Activated naive CD8-positive, alpha-beta T cell treated with anti-CD3 and anti-CD28 coated beads, Interleukin-2, amount 10 ng/mL, durations not matched to agents 7 days and 5 days (primary cell): ENCODE measurements at regions of chr19 and their contacts with region 1.

Region 1: DNA sequence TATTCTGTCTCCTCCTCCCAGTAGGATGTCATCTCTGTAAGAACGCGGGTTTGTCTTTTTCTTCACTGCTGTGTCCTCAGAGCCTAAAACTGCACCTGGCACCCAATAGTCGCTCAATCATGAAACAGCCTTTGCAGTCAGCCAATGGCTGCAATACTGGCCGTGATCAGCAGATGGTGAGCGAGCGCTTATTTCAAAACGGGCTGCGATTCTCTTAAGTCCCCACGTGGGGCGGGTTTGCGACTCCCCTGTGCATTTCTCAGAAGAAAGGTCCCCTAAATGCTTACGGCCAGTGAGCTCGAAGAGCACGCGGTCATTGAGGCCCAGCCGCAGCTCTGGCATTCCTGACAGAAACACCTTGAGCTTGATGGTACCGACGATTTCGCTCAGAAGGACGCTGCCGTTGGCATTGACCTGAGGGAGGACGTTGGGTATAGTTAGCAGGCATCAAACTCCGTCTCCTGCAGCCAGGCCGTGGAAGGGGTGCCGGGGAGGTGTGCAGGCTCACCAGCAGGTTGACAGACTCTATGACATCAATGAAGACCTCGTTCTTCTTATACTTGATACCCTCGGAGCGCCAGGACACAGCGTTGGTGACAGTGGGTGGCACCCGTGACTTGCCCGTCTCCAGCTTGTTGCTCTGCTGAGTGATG is 6.0 kb downstream of the AP1M2 start:
- DNase-seq: peak; percentile 89
- ATAC-seq: peak; percentile 81
- H3K4me3 Mint-ChIP-seq: peak overlapping the region; percentile 33
- H3K27ac Mint-ChIP-seq: no peak overlapping the region
- H3K4me1 Mint-ChIP-seq: peaks cover 15% of the 10 kb centered on the region
- H3K27me3 Mint-ChIP-seq: peaks cover 6% of the 10 kb centered on the region

Region 2: DNA sequence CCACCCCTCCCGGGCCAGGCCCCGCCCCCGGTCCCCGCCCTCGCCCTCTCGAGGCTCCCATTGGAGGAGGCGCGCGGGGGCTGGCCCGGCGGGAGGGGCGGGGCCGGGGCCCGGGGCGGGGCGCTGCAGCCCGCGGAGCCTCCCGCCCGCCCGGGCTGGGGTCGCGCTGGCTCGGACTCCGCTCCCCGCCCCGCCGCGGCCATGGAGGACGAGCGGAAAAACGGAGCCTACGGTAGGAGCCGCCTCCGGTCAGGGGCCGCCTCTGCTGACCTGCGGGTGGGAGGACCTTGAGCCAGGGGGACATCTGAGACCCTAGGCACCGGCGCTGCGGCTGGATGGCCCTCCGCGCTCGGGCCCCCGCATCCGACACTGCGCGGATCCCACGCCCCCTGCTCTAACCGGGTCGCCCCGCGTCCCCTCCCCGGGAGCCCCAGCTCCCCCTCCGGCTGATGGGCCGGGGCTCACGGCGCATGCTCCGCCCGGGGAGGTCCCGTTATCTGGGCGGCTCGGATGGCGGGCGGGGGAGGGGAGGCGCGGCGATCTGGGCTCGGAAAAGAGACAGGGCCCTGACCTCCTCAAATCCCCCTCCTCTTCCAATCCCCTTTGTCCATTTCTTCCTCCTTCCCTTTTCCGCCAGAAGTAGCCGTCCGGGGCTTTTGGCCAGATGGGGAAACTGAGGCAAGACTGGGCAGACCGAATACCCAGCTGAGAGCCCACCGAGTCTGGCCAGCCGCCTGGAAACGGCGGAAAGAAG is 21.4 kb after region 1 on chr19:
- POLR2A ChIA-PET with region 1: interaction called, 21 read pairs
- DNase-seq: peak; percentile 94
- ATAC-seq: peak; percentile 69
- H3K4me3 Mint-ChIP-seq: peak overlapping the region; percentile 99
- H3K27ac Mint-ChIP-seq: peak overlapping the region; percentile 100
- H3K4me1 Mint-ChIP-seq: peaks cover 23% of the 10 kb centered on the region
- H3K27me3 Mint-ChIP-seq: peaks cover 4% of the 10 kb centered on the region